B cell (primary cell): ENCODE measurements at regions of chr2 and their contacts with region 1.

Region 1: GRCh38 chr2:182980115-182980514 is 58.1 kb downstream of the NCKAP1 start:
- DNase-seq: peak; percentile 46
- ATAC-seq: no peak
- H3K4me3 ChIP-seq: no peak overlapping the region
- H3K4me3 Mint-ChIP-seq: no peak overlapping the region
- H3K27ac ChIP-seq: no peak overlapping the region
- H3K27ac Mint-ChIP-seq: no peak overlapping the region
- H3K4me1 ChIP-seq: no peaks in the 10 kb centered on the region
- H3K4me1 Mint-ChIP-seq: no peaks in the 10 kb centered on the region
- H3K27me3 ChIP-seq: peaks cover 0 to 4% (median 0%) of the 10 kb centered on the region in 4 experiments
- H3K27me3 Mint-ChIP-seq: peaks cover 8% of the 10 kb centered on the region
- CTCF ChIP-seq: peak; percentile 85

Region 2: GRCh38 chr2:182186132-182186735 is 793.9 kb before region 1 on chr2:
- CTCF ChIA-PET with region 1: interaction called, 85 read pairs
- POLR2A ChIA-PET with region 1: no interaction called
- intact Hi-C with region 1: loop called (anchors 1 kb)
- DNase-seq: peak; percentile 50
- ATAC-seq: peak; percentile 51
- H3K4me3 ChIP-seq: no peak overlapping the region
- H3K4me3 Mint-ChIP-seq: no peak overlapping the region
- H3K27ac ChIP-seq: no peak overlapping the region
- H3K27ac Mint-ChIP-seq: no peak overlapping the region
- H3K4me1 ChIP-seq: no peaks in the 10 kb centered on the region
- H3K4me1 Mint-ChIP-seq: no peaks in the 10 kb centered on the region
- H3K27me3 ChIP-seq: no peaks in the 10 kb centered on the region
- H3K27me3 Mint-ChIP-seq: peaks cover 5% of the 10 kb centered on the region
- CTCF ChIP-seq: peak; percentile 92

Region 3: DNA sequence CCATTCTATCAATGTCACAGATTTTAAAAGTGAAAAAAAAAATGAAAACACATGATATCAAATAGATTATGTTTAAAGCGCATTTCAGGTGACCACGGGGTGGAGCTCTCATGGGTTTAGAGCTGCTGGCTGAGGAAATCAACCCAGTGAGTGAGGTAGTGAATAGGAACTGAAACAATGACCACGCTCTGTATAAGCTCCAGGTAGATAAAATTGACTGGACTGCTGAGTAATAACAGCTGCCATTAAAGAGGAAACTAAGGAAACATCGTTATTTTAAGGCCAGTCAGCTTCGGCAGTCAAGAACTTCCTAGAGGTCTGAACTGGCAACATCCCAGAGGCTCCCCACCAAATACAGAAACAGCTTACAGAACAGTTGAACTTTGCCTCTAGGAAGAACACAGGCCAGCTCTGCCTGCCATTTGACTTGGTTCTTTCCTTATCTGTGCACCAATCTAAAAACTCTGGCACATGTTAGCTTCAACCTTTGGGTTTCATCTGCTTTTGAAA is 739.2 kb before region 1 on chr2:
- CTCF ChIA-PET with region 1: interaction called, 16 read pairs
- POLR2A ChIA-PET with region 1: no interaction called
- intact Hi-C with region 1: loop called (anchors 1 kb)
- DNase-seq: peak; percentile 41
- ATAC-seq: no peak
- H3K4me3 ChIP-seq: no peak overlapping the region
- H3K4me3 Mint-ChIP-seq: no peak overlapping the region
- H3K27ac ChIP-seq: no peak overlapping the region
- H3K27ac Mint-ChIP-seq: no peak overlapping the region
- H3K4me1 ChIP-seq: no peaks in the 10 kb centered on the region
- H3K4me1 Mint-ChIP-seq: peaks cover 6% of the 10 kb centered on the region
- H3K27me3 ChIP-seq: no peaks in the 10 kb centered on the region
- H3K27me3 Mint-ChIP-seq: no peaks in the 10 kb centered on the region
- CTCF ChIP-seq: no peak

Region 4: GRCh38 chr2:182666674-182667314 is 313.3 kb before region 1 on chr2:
- CTCF ChIA-PET with region 1: interaction called, 52 read pairs
- POLR2A ChIA-PET with region 1: no interaction called
- intact Hi-C with region 1: loop called (anchors 1 kb)
- DNase-seq: peak; percentile 68
- ATAC-seq: peak; percentile 72
- H3K4me3 ChIP-seq: no peak overlapping the region
- H3K4me3 Mint-ChIP-seq: no peak overlapping the region
- H3K27ac ChIP-seq: no peak overlapping the region
- H3K27ac Mint-ChIP-seq: no peak overlapping the region
- H3K4me1 ChIP-seq: peaks cover 4% of the 10 kb centered on the region in 2 donors
- H3K4me1 Mint-ChIP-seq: peaks cover 8% of the 10 kb centered on the region
- H3K27me3 ChIP-seq: no peaks in the 10 kb centered on the region
- H3K27me3 Mint-ChIP-seq: no peaks in the 10 kb centered on the region
- CTCF ChIP-seq: peak; percentile 73

Region 5: DNA sequence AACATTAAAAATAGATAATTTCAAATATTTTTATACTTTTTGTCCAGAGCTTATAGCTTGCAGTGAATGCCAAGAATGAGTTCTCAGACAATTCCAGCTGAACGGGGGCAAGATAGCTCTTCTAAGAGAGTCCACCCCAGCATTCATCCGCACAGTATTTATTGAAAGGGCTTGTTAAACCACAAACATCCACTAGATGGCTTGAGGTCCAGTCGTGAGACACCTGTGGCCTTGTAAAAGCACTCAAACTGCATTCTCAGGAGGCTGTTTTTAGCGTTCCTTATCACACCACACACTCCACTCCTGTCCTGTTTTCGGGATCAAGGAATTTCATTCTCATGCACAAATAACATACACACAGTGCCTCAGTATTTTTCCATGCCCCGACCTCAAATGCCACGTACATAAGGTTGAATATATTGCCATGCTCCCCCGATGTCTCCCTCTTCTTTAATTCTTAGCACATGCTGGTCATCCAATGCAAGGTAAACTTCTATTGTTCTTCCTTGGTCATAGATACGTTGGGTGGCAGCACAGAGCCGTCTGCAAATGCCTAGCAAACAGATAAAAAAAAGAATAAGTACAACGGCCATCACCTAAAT is 216.7 kb before region 1 on chr2:
- CTCF ChIA-PET with region 1: interaction called, 18 read pairs
- POLR2A ChIA-PET with region 1: no interaction called
- intact Hi-C with region 1: loop called (anchors 5 kb)
- DNase-seq: peak; percentile 16
- ATAC-seq: no peak
- H3K4me3 ChIP-seq: no peak overlapping the region
- H3K4me3 Mint-ChIP-seq: no peak overlapping the region
- H3K27ac ChIP-seq: no peak overlapping the region
- H3K27ac Mint-ChIP-seq: no peak overlapping the region
- H3K4me1 ChIP-seq: no peaks in the 10 kb centered on the region
- H3K4me1 Mint-ChIP-seq: no peaks in the 10 kb centered on the region
- H3K27me3 ChIP-seq: no peaks in the 10 kb centered on the region
- H3K27me3 Mint-ChIP-seq: no peaks in the 10 kb centered on the region
- CTCF ChIP-seq: peak; percentile 45

Region 6: DNA sequence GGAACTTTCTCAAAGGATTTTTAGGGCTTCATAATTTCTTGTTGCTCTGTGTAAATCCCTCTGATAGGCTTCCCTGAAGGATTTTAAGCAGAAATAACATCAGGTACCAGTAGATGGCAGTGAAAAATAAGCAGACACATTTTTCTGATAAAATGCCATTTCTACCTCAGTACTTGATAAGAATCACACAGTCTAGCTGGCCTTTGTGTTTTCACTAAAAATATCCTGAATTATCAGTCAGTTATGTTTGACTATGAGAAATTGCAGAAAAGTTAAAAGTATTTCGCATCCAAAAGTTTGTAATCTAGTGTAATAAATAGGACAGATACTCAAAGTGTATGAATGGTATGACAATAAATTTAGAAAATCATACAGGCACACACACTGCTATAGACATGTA is 195.3 kb before region 1 on chr2:
- CTCF ChIA-PET with region 1: interaction called, 3 read pairs
- POLR2A ChIA-PET with region 1: no interaction called
- intact Hi-C with region 1: loop called (anchors 10 kb)
- DNase-seq: no peak
- ATAC-seq: no peak
- H3K4me3 ChIP-seq: no peak overlapping the region
- H3K4me3 Mint-ChIP-seq: no peak overlapping the region
- H3K27ac ChIP-seq: no peak overlapping the region
- H3K27ac Mint-ChIP-seq: no peak overlapping the region
- H3K4me1 ChIP-seq: no peaks in the 10 kb centered on the region
- H3K4me1 Mint-ChIP-seq: no peaks in the 10 kb centered on the region
- H3K27me3 ChIP-seq: no peaks in the 10 kb centered on the region
- H3K27me3 Mint-ChIP-seq: no peaks in the 10 kb centered on the region
- CTCF ChIP-seq: peak; percentile 21